CD8-positive, alpha-beta T cell (primary cell): ENCODE measurements at regions of chr17 and their contacts with region 1.

Region 1: GRCh38 chr17:74981979-74982662 is 5.3 kb upstream of the CDR2L start:
- DNase-seq: peak; percentile 57 to 92 (median 78)
- ATAC-seq: peak; percentile 89
- H3K4me3 ChIP-seq: peak overlapping the region; percentile 66
- H3K4me3 Mint-ChIP-seq: peak overlapping the region; percentile 87
- H3K27ac ChIP-seq: peak overlapping the region; percentile 74 to 76
- H3K27ac Mint-ChIP-seq: peak overlapping the region; percentile 86
- H3K4me1 ChIP-seq: peaks cover 21% of the 10 kb centered on the region
- H3K4me1 Mint-ChIP-seq: peaks cover 21% of the 10 kb centered on the region
- H3K27me3 ChIP-seq: no peaks in the 10 kb centered on the region
- H3K27me3 Mint-ChIP-seq: peaks cover 5% of the 10 kb centered on the region
- CTCF ChIP-seq: no peak

Region 2: DNA sequence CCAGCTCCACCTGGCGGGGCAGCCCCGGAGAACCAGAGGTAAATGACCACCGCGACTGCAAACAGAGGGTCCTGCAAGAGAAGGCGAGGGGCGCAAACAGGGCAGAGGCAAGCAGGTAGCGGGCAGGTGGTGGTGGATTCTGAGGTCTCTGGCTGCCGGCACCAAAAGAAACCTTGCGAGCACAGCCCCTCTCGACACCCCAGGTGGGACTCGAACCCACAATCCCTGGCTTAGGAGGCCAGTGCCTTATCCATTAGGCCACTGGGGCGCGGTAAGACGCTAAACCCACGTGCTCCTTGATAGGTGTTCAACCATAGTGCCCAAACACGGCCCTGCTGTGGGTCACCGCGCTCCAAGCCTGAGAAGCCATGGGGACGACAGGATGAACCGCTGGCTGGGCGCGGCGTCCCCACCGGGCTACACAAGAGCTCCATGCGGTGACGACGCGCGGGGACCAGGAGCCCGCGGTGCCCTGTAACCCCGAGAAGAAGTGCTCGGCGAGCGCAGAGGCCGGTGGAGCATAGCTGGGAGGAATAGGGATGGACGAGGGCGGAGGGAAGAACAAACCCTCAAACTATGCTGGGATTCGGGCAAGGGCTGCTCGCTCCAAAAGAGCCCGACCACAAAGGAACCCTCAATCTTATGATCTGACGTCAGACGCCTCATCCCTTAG is 52.3 kb after region 1 on chr17:
- CTCF ChIA-PET with region 1: interaction called, 3 read pairs
- POLR2A ChIA-PET with region 1: interaction called, 3 read pairs
- intact Hi-C with region 1: loop called in 1 of 2 experiments (anchors 2 kb)
- DNase-seq: peak; percentile 63 to 87 (median 80)
- ATAC-seq: peak; percentile 17
- H3K4me3 ChIP-seq: peak overlapping the region; percentile 66 to 94
- H3K4me3 Mint-ChIP-seq: peak overlapping the region; percentile 92
- H3K27ac ChIP-seq: peak overlapping the region; percentile 53 to 56
- H3K27ac Mint-ChIP-seq: peak overlapping the region; percentile 98
- H3K4me1 ChIP-seq: peaks cover 45% of the 10 kb centered on the region
- H3K4me1 Mint-ChIP-seq: peaks cover 53% of the 10 kb centered on the region
- H3K27me3 ChIP-seq: no peaks in the 10 kb centered on the region
- H3K27me3 Mint-ChIP-seq: no peaks in the 10 kb centered on the region
- CTCF ChIP-seq: no peak